ENCODE measurements at regions of chr1 and their contacts with region 1.

Region 1: GRCh38 chr1:152459596-152460528 is 45.8 kb upstream of the CRNN start:
- DNase-seq: peak; percentile 80
- ATAC-seq: peak; percentile 54

Region 2: DNA sequence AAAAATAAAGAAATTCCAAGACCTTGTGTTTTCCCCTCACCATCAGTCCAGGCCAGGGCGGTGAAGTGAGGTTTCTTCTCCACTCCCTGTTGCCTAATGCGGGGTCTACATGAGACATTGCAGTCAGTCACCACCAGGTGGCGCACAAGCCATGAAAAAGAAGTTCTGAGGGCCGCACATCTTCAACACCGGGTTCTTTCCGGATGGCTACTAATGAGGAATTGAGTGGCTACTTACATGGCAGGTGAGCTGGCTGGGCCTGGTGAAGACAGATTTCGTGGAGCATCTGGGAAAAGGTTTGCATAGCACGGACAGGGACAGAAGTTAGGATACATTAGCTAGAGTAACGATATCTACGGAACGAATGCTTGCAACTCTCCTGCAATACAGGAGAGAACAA is 407.3 kb before region 1 on chr1:
- intact Hi-C with region 1: loop called (anchors 1 kb)
- DNase-seq: peak; percentile 88
- ATAC-seq: peak; percentile 35

Region 3: DNA sequence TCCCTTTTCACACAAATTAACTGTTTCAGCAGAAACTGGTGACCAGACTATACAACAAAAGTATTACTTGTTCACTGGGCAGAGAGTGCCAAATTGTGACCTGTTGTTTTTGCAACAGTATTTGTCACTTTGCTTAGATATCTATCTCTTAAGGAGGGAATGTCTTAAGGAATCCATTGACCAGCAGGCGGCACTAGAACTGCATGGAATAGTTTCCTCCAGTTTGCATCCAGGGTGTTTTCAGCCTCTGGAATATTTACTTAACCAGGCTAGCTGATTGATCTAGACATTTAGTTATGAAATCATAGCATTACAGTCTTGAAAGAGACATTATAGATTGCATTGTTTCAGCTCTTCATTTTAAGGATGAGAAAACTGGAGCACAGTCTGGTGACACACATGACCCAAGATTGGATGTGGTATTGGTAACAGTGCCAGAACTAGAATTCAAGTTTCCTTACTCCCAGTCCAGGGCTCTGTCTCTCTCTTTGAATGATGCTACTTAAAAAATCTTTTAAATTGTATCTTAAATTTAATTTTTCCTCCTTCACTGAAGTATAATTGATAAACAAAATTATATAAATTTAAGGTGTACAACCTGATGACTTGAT is 317.8 kb before region 1 on chr1:
- intact Hi-C with region 1: loop called (anchors 2 kb)
- DNase-seq: no peak
- ATAC-seq: no peak

Region 4: DNA sequence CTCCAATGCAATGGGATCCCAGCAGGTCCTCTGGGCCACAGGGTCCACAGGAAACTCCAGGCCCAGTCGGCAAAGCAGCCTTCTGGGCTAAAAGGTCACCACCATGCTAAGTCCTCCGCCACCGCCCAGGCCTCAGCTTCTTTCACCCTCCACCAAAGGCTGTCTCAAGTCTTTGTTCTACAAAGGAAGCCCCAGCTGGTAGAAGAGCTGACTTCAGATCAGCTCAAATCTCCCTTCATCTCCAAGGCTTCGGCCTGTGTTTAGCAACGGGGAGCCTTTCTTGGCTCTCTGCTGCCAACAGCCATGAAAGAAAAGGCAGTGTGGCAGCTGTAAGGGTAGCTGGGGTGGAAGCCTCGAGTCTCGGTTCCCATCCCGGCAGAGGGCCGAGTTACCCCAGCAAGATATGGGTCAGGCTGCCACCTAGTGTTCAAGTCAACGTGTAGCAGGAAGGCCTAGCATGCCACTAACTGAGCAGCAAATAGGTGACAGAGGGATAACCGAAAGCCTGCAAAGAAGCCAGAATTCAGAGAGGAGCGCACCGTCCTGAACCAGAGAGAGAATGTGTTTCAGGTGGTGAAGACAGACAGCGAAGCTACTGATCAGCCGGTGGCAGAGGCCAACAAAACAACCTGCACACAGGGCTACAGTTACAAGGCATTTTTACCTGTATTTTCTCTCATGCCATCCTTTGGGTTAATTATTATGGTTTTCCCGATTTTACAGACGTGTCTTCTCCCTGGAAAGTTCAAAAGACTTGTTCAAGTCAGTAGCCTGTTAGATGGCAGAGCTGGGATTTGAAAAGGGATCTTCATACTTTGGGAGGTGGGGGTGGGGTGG is 19.0 kb before region 1 on chr1:
- intact Hi-C with region 1: loop called (anchors 2 kb)
- DNase-seq: peak; percentile 80
- ATAC-seq: peak; percentile 78